ENCODE measurements at regions of chr7 and their contacts with region 1.

Region 1: DNA sequence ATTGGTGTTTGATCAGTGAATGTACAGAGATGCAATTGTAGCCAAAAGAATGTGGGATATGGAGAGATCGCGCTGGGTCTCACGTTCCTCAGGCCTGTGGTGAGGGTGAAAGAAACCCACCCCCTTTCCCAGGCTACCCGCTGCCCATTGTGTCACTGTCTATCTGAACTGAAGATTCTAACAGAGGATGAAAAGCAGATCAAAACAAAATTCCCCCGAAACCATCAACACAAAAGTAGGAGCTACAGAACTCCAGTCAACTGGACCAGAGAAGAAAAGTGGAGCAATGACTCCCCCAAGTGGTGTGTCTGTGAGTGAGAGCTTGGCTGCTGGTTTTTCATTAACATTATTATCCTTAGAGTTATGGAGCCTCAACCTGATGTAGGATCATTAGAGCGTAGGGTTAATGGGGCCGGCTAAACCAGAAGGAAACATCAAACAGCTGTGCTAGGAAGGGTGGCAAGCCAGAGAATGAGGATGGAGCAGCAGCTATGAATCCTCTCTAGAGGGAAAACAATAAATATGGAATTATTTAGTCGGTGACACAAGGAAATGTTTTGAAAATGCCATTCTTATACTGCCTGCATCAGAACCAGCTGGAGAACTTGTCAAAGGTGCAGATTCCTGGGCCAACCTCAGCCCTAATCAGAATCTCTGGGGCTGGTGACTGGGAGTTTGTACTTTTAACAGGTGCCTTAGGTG is 38.3 kb downstream of the AKR1B1 start:
- DNase-seq: peak; percentile 50 to 74 (median 62)
- ATAC-seq: peak; percentile 94
- H3K4me3 ChIP-seq: no peak overlapping the region
- H3K27ac ChIP-seq: no peak overlapping the region
- H3K4me1 ChIP-seq: peaks cover 0 to 4% of the 10 kb centered on the region in 2 experiments; a peak in 1 of 5 replicates
- H3K27me3 ChIP-seq: peaks cover 5 to 31% of the 10 kb centered on the region in 2 experiments
- CTCF ChIP-seq: peak; percentile 75 to 95 (median 89)
- EP300 ChIP-seq: no peak
- POLR2A ChIP-seq: no peak
- RAD21 ChIP-seq: peak; percentile 80 to 86

Region 2: GRCh38 chr7:133863362-133864061 is 557.1 kb before region 1 on chr7:
- CTCF ChIA-PET with region 1: no interaction called
- POLR2A ChIA-PET with region 1: no interaction called
- in situ Hi-C with region 1: no loop called
- intact Hi-C with region 1: loop called (anchors 5 kb)
- DNase-seq: no peak
- ATAC-seq: no peak
- H3K4me3 ChIP-seq: no peak overlapping the region
- H3K27ac ChIP-seq: no peak overlapping the region
- H3K4me1 ChIP-seq: no peaks in the 10 kb centered on the region
- H3K27me3 ChIP-seq: no peaks in the 10 kb centered on the region
- CTCF ChIP-seq: no peak
- EP300 ChIP-seq: no peak
- POLR2A ChIP-seq: no peak
- RAD21 ChIP-seq: no peak

Region 3: GRCh38 chr7:134129856-134130523 is 290.6 kb before region 1 on chr7:
- CTCF ChIA-PET with region 1: no interaction called
- POLR2A ChIA-PET with region 1: no interaction called
- in situ Hi-C with region 1: loop called (anchors 10 kb)
- intact Hi-C with region 1: no loop called
- DNase-seq: no peak
- ATAC-seq: no peak
- H3K4me3 ChIP-seq: no peak overlapping the region
- H3K27ac ChIP-seq: no peak overlapping the region
- H3K4me1 ChIP-seq: peaks cover 6 to 11% of the 10 kb centered on the region in 2 experiments; a peak in 3 of 5 replicates
- H3K27me3 ChIP-seq: peaks cover 10 to 18% of the 10 kb centered on the region in 2 experiments; a peak in 3 of 5 replicates
- CTCF ChIP-seq: no peak
- EP300 ChIP-seq: no peak
- POLR2A ChIP-seq: no peak
- RAD21 ChIP-seq: no peak

Region 4: GRCh38 chr7:134140889-134141867 is 279.4 kb before region 1 on chr7:
- CTCF ChIA-PET with region 1: interaction called, 3 read pairs
- POLR2A ChIA-PET with region 1: no interaction called
- in situ Hi-C with region 1: loop called (anchors 10 kb)
- intact Hi-C with region 1: loop called (anchors 5 kb)
- DNase-seq: peak; percentile 89 to 92 (median 90)
- ATAC-seq: peak; percentile 99
- H3K4me3 ChIP-seq: no peak overlapping the region
- H3K27ac ChIP-seq: no peak overlapping the region
- H3K4me1 ChIP-seq: peaks cover 0 to 3% of the 10 kb centered on the region in 2 experiments; a peak in 2 of 5 replicates
- H3K27me3 ChIP-seq: peaks cover 0 to 4% of the 10 kb centered on the region in 2 experiments; a peak in 1 of 5 replicates
- CTCF ChIP-seq: peak; percentile 92 to 98 (median 97)
- EP300 ChIP-seq: 0 out of 2 replicates have a peak, but pooled peaks have one; percentile 13
- POLR2A ChIP-seq: no peak
- RAD21 ChIP-seq: peak; percentile 93 to 95

Region 5: GRCh38 chr7:134327896-134328295 is 92.7 kb before region 1 on chr7:
- CTCF ChIA-PET with region 1: no interaction called
- POLR2A ChIA-PET with region 1: no interaction called
- in situ Hi-C with region 1: no loop called
- intact Hi-C with region 1: loop called (anchors 5 kb)
- DNase-seq: peak; percentile 76 to 91 (median 82)
- ATAC-seq: peak; percentile 99
- H3K4me3 ChIP-seq: no peak overlapping the region
- H3K27ac ChIP-seq: no peak overlapping the region
- H3K4me1 ChIP-seq: no peaks in the 10 kb centered on the region
- H3K27me3 ChIP-seq: peaks cover 8 to 15% of the 10 kb centered on the region in 2 experiments
- CTCF ChIP-seq: peak; percentile 86 to 93 (median 92)
- EP300 ChIP-seq: no peak
- POLR2A ChIP-seq: no peak
- RAD21 ChIP-seq: peak; percentile 69 to 90